SK-N-SH (cell line): ENCODE measurements at regions of chr12 and their contacts with region 1.

Region 1: GRCh38 chr12:52121824-52122539 is 42.5 kb downstream of the SMIM41 start:
- DNase-seq: peak; percentile 87
- H3K4me3 ChIP-seq: no peak overlapping the region
- H3K27ac ChIP-seq: no peak overlapping the region
- H3K4me1 ChIP-seq: peaks cover 0 to 26% of the 10 kb centered on the region in 2 experiments; a peak in 1 of 4 replicates
- H3K27me3 ChIP-seq: peaks cover 4% of the 10 kb centered on the region; the same call in 1 of the 2 replicates
- CTCF ChIP-seq: peak; percentile 77
- EP300 ChIP-seq: peak in 1 of 2 experiments; percentile 9; a peak in 1 of 4 replicates
- RAD21 ChIP-seq: peak; percentile 78

Region 2: GRCh38 chr12:52139552-52140062 is 17.6 kb after region 1 on chr12:
- CTCF ChIA-PET with region 1: interaction called, 35 read pairs
- POLR2A ChIA-PET with region 1: no interaction called
- DNase-seq: peak; percentile 84
- H3K4me3 ChIP-seq: no peak overlapping the region; a peak in 1 of 4 replicates
- H3K27ac ChIP-seq: no peak overlapping the region
- H3K4me1 ChIP-seq: no peaks in the 10 kb centered on the region
- H3K27me3 ChIP-seq: peaks cover 4% of the 10 kb centered on the region; the same call in 1 of the 2 replicates
- CTCF ChIP-seq: peak; percentile 79
- EP300 ChIP-seq: no peak
- RAD21 ChIP-seq: peak; percentile 73

Region 3: DNA sequence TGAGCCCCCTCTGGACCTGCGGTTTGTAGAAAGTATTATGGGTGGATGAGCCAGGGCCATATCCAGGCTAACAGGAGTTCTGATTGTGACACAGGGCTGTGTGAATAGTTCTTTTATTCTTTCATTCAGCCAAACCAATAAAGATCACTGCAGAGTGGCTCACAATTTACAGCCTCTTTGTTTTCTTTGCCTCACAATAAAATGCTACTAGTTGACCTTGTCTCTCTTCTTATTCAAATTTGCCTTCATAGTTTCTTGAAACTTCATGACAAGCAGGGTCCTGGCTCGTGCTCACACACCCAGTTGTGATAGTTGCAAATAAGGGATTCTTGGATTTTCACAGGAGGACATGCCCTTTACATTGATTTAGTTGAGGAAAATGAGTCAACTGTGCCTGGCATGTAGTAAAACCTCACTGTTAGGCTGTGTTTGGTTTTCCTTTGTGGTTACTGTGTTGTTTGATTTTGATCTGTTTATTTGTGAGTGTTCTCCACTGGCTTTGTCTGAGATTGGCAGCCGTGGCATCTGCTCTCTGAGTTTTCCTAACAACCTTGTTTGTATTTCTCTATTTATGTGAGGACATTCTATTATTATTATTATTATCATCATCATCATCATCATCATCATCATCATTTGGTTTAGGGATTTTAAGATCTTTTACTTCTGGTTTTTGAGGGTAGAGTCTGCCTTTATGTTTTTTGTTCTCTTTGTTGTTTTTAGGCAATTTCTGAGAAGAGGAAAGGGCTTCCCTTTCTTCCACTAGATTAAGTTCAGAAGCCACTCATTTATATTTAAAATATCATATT is 332.6 kb after region 1 on chr12:
- CTCF ChIA-PET with region 1: no interaction called
- POLR2A ChIA-PET with region 1: no interaction called
- DNase-seq: no peak
- H3K4me3 ChIP-seq: no peak overlapping the region
- H3K27ac ChIP-seq: no peak overlapping the region
- H3K4me1 ChIP-seq: no peaks in the 10 kb centered on the region
- H3K27me3 ChIP-seq: peaks cover 15% of the 10 kb centered on the region
- CTCF ChIP-seq: no peak
- EP300 ChIP-seq: no peak
- RAD21 ChIP-seq: no peak